ENCODE measurements at regions of chr15 and their contacts with region 1.

Region 1: GRCh38 chr15:60179786-60180391 is 175.8 kb downstream of the FOXB1 start:
- DNase-seq: peak; percentile 12
- H3K4me3 ChIP-seq: no peak overlapping the region
- H3K27ac ChIP-seq: no peak overlapping the region
- H3K4me1 ChIP-seq: no peaks in the 10 kb centered on the region
- H3K27me3 ChIP-seq: peaks cover 10% of the 10 kb centered on the region
- CTCF ChIP-seq: peak; percentile 61 to 79 (median 74)
- EP300 ChIP-seq: no peak
- POLR2A ChIP-seq: no peak

Region 2: GRCh38 chr15:59699810-59700431 is 480.0 kb before region 1 on chr15:
- in situ Hi-C with region 1: loop called in 1 of 4 experiments (anchors 25 kb)
- intact Hi-C with region 1: no loop called
- DNase-seq: no peak
- H3K4me3 ChIP-seq: no peak overlapping the region
- H3K27ac ChIP-seq: no peak overlapping the region
- H3K4me1 ChIP-seq: no peaks in the 10 kb centered on the region
- H3K27me3 ChIP-seq: peaks cover 31% of the 10 kb centered on the region
- CTCF ChIP-seq: no peak
- EP300 ChIP-seq: no peak
- POLR2A ChIP-seq: no peak

Region 3: DNA sequence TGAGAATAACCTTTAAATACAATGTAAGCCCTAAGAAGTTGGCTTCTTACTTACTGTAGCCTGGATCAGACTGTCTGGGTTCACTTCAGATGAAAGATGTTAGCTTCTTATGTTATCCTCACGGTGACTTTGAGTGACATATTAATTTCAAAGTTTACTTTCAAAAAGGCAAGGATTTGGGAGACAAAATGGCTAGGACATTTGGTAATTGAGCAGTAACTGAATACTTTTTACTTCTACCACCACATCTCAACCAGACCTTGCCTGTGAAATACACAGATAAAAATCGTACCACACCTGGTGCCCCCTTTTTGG is 454.8 kb before region 1 on chr15:
- in situ Hi-C with region 1: loop called (anchors 10 to 25 kb)
- intact Hi-C with region 1: no loop called
- DNase-seq: no peak
- H3K4me3 ChIP-seq: no peak overlapping the region
- H3K27ac ChIP-seq: no peak overlapping the region
- H3K4me1 ChIP-seq: no peaks in the 10 kb centered on the region
- H3K27me3 ChIP-seq: peaks cover 13% of the 10 kb centered on the region
- CTCF ChIP-seq: no peak
- EP300 ChIP-seq: no peak
- POLR2A ChIP-seq: no peak

Region 4: DNA sequence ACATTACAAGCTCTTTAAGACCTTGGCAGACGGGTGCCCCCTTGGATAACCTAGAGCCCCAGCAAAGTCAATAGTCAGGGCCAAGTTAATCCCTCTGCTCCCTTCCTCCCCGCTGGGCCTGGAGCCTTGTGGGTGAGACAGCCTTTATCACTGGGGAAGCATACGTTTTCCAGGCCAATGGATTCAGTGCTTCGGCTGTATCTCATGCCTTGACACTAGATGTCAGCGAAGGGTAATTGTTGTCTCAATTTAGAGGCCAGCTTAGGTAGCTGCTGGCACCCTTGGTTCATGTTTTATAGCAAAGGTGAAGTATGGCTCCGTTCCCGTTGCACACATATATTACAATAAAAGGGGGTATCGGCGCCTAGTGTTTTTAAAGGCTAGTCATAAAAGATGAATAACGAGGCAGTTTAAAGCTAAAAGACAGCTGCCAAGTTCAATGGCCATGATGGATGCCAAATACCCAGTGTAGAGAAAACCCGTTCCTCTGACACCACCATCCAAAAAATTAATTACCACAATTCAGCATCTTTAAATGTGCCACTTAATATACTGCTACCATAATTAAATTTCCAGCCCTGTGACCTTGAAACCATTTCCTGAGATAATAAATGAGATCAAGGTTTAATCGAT is 438.5 kb before region 1 on chr15:
- in situ Hi-C with region 1: loop called in 1 of 4 experiments (anchors 25 kb)
- intact Hi-C with region 1: no loop called
- DNase-seq: no peak
- H3K4me3 ChIP-seq: no peak overlapping the region
- H3K27ac ChIP-seq: no peak overlapping the region
- H3K4me1 ChIP-seq: no peaks in the 10 kb centered on the region
- H3K27me3 ChIP-seq: peaks cover 6% of the 10 kb centered on the region
- CTCF ChIP-seq: no peak
- EP300 ChIP-seq: no peak
- POLR2A ChIP-seq: no peak

Region 5: DNA sequence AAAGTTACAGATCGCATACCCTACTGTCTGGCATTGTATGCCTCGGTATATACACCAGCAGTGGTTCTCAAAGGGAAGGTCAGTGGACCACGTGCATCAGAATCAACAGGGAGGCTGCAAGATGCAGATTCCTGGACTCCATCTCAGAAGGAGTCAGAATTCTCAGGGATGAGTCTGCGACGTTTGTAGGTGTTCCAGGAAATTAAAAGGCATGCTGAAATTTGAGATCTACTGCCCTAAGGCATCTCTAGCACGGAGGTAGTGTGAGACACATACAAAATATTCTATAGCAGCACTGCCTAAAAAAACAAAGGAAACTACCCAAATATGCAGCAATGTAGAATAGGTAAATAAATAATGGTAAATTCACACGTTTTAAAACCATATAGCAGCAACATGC is 354.0 kb before region 1 on chr15:
- in situ Hi-C with region 1: no loop called
- intact Hi-C with region 1: no loop called
- DNase-seq: no peak
- H3K4me3 ChIP-seq: no peak overlapping the region
- H3K27ac ChIP-seq: no peak overlapping the region
- H3K4me1 ChIP-seq: no peaks in the 10 kb centered on the region
- H3K27me3 ChIP-seq: peaks cover 12% of the 10 kb centered on the region
- CTCF ChIP-seq: no peak
- EP300 ChIP-seq: no peak
- POLR2A ChIP-seq: no peak

Region 6: DNA sequence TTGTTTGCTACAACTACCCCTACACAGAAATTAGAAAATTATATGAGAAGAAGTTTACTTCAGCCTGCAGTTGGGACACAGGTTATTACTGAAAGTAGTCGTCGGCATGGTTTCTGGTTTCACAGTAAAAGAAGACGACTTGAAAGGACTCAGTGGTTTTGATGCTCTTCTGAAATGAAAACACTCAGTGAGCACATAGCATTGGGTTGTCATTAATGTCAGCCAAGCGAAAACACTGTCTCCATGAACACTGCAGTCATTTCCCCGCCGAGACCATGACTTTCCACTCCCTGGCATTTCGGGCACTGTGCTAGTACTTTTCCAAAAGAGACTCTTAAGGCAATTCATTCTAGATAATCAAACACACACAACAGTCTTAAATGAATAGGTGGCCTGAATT is 368.2 kb after region 1 on chr15:
- in situ Hi-C with region 1: no loop called
- intact Hi-C with region 1: no loop called
- DNase-seq: no peak
- H3K4me3 ChIP-seq: no peak overlapping the region
- H3K27ac ChIP-seq: no peak overlapping the region
- H3K4me1 ChIP-seq: no peaks in the 10 kb centered on the region
- H3K27me3 ChIP-seq: no peaks in the 10 kb centered on the region
- CTCF ChIP-seq: no peak
- EP300 ChIP-seq: no peak
- POLR2A ChIP-seq: no peak